ENCODE measurements at regions of chr7 and their contacts with region 1.

Region 1: GRCh38 chr7:87148332-87148955 is 3.8 kb upstream of the DMTF1 start:
- DNase-seq: peak; percentile 45
- CTCF ChIP-seq: no peak

Region 2: DNA sequence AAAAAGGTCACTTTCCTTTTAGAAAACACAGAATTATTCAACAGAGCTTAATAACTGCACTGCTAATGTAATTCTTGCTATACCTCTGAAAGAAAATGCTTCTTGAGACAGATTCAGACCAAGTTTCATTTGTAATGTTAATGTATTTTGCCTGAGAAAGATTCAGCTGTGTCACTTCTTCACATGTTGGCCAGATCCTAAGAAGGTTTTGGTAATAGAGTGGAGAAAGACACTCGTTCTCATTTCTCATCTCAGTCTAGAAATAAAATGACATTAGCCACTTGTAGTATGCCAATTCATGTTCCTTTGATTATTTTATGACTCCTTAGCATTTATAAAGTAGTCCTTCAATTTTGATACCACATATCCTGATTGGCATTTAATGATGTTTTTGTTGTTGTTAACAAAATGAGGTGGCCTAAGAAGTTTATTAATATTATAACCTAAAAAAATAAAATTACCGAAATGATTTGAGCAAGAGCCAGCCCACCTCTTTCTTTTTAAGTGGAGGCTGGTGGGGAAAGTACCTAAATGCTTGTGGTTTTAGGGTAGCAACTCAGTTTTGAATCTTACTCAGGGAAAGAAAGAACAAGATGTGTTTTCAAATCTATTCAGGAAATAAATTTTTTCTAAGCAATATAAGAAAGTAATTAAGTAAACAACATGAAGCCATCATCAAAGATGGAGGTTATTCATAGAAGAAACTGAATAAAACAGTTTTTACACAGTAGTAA is 72.6 kb before region 1 on chr7:
- in situ Hi-C with region 1: loop called (anchors 10 kb)
- DNase-seq: peak; percentile 16
- CTCF ChIP-seq: no peak

Region 3: DNA sequence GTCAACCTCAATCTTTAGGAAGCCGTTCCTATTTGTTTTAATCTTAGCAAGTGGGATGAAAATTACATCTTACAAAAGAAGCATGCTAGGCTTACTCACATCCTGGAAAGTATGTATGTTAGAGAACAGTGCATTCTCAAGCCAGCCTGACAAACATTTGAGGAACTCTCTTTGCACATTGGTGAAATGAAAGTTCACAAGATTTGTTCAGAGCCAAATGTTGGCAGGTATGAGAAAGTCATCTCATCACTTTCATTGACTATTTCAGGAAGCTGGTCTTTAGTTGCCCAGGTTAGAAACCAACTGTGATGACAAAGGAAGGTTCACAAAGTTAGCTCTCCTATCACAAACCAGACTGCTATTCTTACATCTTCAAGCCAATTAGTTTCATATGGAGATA is 395.2 kb after region 1 on chr7:
- in situ Hi-C with region 1: no loop called
- DNase-seq: no peak
- CTCF ChIP-seq: no peak

Region 4: DNA sequence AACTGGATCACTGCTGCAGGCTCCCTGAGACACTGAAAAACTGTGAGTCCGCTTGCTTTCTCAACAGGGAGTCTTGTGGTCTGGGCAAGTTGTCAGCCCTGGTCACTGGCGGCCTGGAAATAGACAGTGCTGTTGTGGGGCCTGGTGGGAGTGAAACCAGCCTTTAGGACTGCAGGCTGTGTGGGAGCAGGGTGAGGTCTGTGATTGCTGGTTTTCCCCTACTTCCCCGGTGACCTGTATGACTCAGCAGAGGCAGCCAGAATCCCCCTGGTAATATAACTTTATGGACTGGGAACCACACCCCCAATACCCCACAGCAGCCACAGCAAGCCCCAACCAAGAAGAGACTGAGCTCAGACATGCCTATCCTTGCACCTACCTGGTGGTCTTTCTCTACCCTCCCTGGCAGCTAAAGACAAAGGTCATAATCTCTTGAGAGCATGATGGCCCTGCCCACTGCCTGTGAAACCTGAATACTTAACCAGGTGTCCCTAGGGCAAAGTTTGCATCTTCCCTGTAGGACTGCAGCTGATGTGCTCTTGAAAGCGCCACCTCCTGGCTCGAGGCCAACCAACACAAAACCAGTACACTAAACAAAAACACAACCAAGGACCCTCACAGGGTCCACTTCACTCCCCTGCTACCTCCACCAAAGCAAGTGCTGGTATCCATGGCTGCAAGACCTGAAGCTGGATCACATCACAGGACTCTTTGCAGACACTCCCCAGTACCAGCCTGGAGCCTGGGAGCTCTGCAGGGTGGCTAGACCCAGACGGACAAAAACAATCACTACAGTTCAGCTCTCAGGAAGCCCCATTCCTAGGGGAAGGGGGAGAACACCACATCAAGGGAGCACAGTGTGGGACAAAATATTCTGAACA is 778.4 kb after region 1 on chr7:
- in situ Hi-C with region 1: no loop called
- DNase-seq: peak; percentile 44
- CTCF ChIP-seq: peak; percentile 30